ENCODE measurements at regions of chr10 and their contacts with region 1.

Region 1: DNA sequence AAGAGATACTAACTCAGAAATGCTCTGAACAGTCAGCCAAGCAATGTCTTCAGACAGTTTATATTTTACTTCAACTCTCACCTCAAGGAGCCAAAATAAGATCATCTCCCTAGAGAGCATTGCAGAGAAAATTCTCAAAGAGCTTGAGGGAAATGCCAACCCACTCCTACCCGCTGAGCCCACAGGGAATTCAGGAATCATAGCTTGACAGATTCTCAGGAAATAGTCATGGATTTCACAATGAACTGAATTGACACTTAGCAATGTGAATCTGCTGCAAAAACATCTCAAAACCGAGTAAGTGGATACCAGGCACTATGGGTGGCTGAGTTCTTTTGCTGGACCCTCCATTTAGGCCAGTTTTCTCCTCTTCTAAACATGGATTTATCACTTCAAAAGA is 9.8 kb upstream of the PLAC9 start:
- DNase-seq: no peak
- H3K4me3 ChIP-seq: no peak overlapping the region
- H3K27ac ChIP-seq: no peak overlapping the region
- H3K4me1 ChIP-seq: 0 out of 7 replicates have a peak, but pooled peaks cover 0 to 2% (median 0%) of the 10 kb centered on the region in 4 experiments
- H3K27me3 ChIP-seq: no peaks in the 10 kb centered on the region
- CTCF ChIP-seq: no peak
- EP300 ChIP-seq: no peak
- POLR2A ChIP-seq: no peak
- RAD21 ChIP-seq: no peak

Region 2: DNA sequence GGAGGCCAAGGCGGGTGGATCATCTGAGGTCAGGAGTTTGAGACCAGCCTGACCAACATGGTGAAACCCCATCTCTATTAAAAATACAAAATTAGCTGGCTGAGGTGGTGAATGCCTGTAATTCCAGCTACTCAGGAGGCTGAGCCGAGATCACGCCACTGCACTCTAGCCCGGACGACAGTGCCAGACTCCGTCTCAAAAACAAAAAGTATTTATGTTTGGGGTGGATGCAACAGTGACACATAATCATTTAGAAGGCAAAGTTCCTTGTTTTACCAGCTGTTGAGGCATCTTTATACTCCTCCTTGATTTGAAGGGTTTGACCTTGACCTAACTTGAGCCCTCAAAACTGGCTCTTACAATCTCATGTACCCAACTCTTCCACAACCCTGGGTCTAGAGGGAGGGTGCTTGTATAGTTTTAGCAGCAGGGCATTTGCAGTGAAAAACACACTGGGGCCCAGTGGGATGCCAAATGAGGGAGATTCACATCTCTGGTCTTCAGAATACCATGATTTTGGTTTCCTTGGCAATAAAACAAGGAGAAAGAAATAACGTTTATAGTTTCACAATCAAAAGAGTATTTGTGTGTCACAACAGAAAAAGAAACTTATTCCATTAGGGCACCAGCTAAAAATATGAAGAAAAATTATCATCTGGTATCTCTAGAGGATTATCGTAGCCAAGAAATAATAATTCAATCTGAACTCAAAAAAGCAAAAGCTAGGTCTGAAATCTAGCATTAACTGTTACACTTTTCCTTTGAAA is 58.4 kb before region 1 on chr10:
- CTCF ChIA-PET with region 1: interaction called, 10 read pairs
- POLR2A ChIA-PET with region 1: no interaction called
- DNase-seq: no peak
- H3K4me3 ChIP-seq: no peak overlapping the region
- H3K27ac ChIP-seq: no peak overlapping the region
- H3K4me1 ChIP-seq: peaks cover 0 to 11% (median 5%) of the 10 kb centered on the region in 4 experiments; a peak in 6 of 7 replicates
- H3K27me3 ChIP-seq: no peaks in the 10 kb centered on the region
- CTCF ChIP-seq: no peak
- EP300 ChIP-seq: no peak
- POLR2A ChIP-seq: no peak
- RAD21 ChIP-seq: no peak

Region 3: GRCh38 chr10:80100111-80100510 is 22.6 kb before region 1 on chr10:
- CTCF ChIA-PET with region 1: no interaction called
- POLR2A ChIA-PET with region 1: no interaction called
- DNase-seq: no peak
- H3K4me3 ChIP-seq: no peak overlapping the region
- H3K27ac ChIP-seq: no peak overlapping the region
- H3K4me1 ChIP-seq: peaks cover 5 to 23% (median 16%) of the 10 kb centered on the region in 4 experiments; a peak in 6 of 7 replicates
- H3K27me3 ChIP-seq: no peaks in the 10 kb centered on the region
- CTCF ChIP-seq: no peak
- EP300 ChIP-seq: no peak
- POLR2A ChIP-seq: no peak
- RAD21 ChIP-seq: no peak